H1 (cell line): ENCODE measurements at regions of chr3 and their contacts with region 1.

Region 1: GRCh38 chr3:13700362-13700761 is 151.4 kb downstream of the FBLN2 start:
- DNase-seq: no peak
- H3K4me3 ChIP-seq: no peak overlapping the region
- H3K27ac ChIP-seq: no peak overlapping the region
- H3K4me1 ChIP-seq: peaks cover 5 to 15% (median 7%) of the 10 kb centered on the region in 4 experiments
- H3K27me3 ChIP-seq: no peaks in the 10 kb centered on the region
- CTCF ChIP-seq: no peak
- EP300 ChIP-seq: no peak
- POLR2A ChIP-seq: no peak
- RAD21 ChIP-seq: no peak

Region 2: DNA sequence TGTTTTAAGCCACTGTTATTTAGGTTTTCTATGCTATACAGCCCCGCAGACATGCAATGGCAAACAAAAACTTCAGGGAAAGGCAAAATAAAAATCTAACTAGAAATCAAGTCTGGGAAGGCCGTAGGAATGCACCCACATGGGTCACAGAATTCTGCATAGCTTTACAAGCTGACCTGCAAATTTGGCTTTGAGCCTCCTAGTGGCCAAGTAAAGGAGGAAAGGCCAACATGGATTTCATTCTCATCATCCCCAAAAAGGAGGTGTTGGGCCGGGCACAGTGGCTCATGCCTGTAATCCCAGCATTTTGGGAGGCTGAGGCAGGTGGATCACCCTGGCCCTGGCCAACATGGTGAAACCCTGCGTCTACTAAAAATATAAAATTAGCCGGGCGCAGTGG is 27.2 kb before region 1 on chr3:
- CTCF ChIA-PET with region 1: interaction called, 11 read pairs
- POLR2A ChIA-PET with region 1: no interaction called
- DNase-seq: no peak
- H3K4me3 ChIP-seq: no peak overlapping the region
- H3K27ac ChIP-seq: no peak overlapping the region
- H3K4me1 ChIP-seq: no peaks in the 10 kb centered on the region
- H3K27me3 ChIP-seq: no peaks in the 10 kb centered on the region
- CTCF ChIP-seq: peak; percentile 8 to 71 (median 56)
- EP300 ChIP-seq: no peak
- POLR2A ChIP-seq: no peak
- RAD21 ChIP-seq: peak; percentile 34 to 53